Breast epithelium (tissue), 4 donors: ENCODE measurements at regions of chr3 and their contacts with region 1.

Region 1: GRCh38 chr3:35262406-35262805 is 376.9 kb upstream of the ARPP21 start:
- DNase-seq: no peak
- H3K4me3 ChIP-seq: no peak overlapping the region
- H3K27ac ChIP-seq: no peak overlapping the region
- H3K4me1 ChIP-seq: no peaks in the 10 kb centered on the region
- H3K27me3 ChIP-seq: no peaks in the 10 kb centered on the region
- CTCF ChIP-seq: no peak
- POLR2A ChIP-seq: no peak

Region 2: DNA sequence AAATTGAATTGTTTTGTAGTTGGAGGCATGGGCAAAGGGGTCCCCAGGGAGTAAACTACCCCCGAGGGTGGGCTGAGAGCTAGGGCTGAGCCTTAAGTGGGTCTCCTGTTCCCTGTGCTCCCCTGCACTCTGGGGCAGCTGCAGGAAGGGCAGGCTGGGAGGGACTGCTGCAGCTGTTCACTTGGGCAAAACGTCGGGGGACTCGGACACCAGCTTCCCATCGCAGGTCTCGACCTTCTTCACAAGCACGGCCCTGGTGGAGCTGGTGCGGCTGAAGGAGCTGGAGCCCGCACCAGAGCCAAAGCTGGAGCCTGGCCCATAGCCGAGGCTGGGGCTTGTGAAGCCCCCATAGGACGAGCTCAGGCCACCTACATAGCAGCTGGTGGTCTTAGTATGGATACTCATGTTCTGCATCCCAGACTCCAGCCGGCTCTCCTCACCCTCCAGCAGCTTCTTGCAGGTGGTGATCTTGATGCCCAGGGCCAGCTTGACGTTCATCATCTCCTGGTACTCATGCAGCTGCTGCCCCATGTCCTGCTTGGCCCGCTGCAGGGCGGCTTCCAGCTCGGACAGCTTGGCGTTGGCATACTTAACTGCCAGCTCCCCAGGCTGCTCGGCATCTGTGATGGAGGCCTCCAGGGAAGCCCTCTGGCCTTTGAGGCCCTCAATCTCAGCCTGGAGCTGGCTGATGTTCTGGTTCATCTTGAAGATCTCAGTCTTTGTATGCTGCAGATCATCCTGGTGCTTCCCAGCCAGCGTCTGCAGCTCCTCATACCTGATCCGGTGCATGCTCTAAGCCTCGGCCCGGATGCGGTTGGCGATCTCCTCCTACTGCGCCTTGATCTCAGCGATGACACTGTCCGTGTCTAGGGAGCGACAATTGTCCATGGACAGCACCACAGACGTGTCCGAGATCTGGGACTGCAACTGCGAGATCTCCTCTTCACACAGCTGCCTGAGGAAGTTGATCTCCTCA is 46.6 kb before region 1 on chr3:
- intact Hi-C with region 1: loop called (anchors 5 kb)
- DNase-seq: no peak
- H3K4me3 ChIP-seq: no peak overlapping the region
- H3K27ac ChIP-seq: no peak overlapping the region
- H3K4me1 ChIP-seq: no peaks in the 10 kb centered on the region
- H3K27me3 ChIP-seq: no peaks in the 10 kb centered on the region
- CTCF ChIP-seq: no peak
- POLR2A ChIP-seq: no peak